ENCODE measurements at regions of chr18 and their contacts with region 1.

Region 1: GRCh38 chr18:2672410-2672809 is 16.9 kb downstream of the SMCHD1 start:
- DNase-seq: no peak
- H3K27ac ChIP-seq: no peak overlapping the region
- CTCF ChIP-seq: no peak

Region 2: GRCh38 chr18:731185-731584 is 1941.2 kb before region 1 on chr18:
- CTCF ChIA-PET with region 1: no interaction called
- POLR2A ChIA-PET with region 1: interaction called, 10 read pairs
- DNase-seq: no peak
- H3K27ac ChIP-seq: no peak overlapping the region
- CTCF ChIP-seq: no peak

Region 3: GRCh38 chr18:2571200-2572143 is 100.9 kb before region 1 on chr18 and contains the starts of genes METTL4 and NDC80:
- CTCF ChIA-PET with region 1: no interaction called
- POLR2A ChIA-PET with region 1: no interaction called
- DNase-seq: peak; percentile 87
- H3K27ac ChIP-seq: peak within 1 kb of the TSS; percentile 94
- CTCF ChIP-seq: no peak

Measured in RWPE1 (cell line).